Activated CD8-positive, alpha-beta T cell treated with anti-CD3 and anti-CD28 coated beads, Interleukin-2, amount 10 ng/mL, durations not matched to agents 7 days and 5 days (primary cell): ENCODE measurements at regions of chr10 and their contacts with region 1.

Region 1: DNA sequence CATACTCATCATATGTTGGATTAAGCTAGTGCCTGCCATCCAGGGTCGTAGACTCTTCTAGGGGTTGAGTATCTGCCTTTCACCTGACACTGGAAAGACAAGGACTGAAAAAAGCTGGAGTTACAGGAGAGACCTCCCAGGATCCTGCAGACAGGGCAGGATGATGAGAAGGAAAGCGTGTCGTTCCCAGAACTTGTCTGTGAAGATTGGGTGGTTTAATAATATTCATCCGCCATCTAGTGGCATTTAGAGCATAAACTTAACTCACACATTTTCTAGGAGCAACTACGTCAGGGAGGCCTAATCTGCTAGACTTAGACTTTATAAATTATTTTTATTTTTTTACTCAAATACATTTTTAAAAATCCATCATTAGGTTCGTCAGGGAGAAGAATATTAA is 59.6 kb downstream of the ADRB1 start:
- DNase-seq: peak; percentile 15
- ATAC-seq: peak; percentile 51
- H3K4me3 Mint-ChIP-seq: no peak overlapping the region
- H3K27ac Mint-ChIP-seq: no peak overlapping the region
- H3K4me1 Mint-ChIP-seq: peaks cover 38% of the 10 kb centered on the region
- H3K27me3 Mint-ChIP-seq: peaks cover 40% of the 10 kb centered on the region

Region 2: DNA sequence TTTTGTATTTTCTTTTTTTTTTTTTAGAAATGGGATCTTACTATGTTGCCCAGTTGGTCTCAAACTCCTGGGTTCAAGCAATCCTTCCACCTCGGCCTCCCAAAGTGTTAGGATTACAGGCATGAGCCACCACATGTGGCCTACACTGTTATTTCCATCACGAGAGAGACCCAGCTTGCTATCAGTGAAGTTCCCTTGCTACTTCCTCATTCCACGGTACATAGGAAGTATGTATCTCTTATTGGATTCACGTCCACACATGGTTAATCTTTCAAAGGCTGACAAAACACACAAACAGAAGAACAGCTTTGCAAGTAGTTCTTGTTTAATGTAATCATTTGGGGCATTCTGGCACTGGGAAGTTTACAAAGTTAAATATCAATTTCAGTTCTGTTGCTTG is 300.3 kb before region 1 on chr10:
- CTCF ChIA-PET with region 1: interaction called, 85 read pairs
- POLR2A ChIA-PET with region 1: no interaction called
- DNase-seq: no peak
- ATAC-seq: no peak
- H3K4me3 Mint-ChIP-seq: no peak overlapping the region
- H3K27ac Mint-ChIP-seq: no peak overlapping the region
- H3K4me1 Mint-ChIP-seq: no peaks in the 10 kb centered on the region
- H3K27me3 Mint-ChIP-seq: peaks cover 38% of the 10 kb centered on the region

Region 3: DNA sequence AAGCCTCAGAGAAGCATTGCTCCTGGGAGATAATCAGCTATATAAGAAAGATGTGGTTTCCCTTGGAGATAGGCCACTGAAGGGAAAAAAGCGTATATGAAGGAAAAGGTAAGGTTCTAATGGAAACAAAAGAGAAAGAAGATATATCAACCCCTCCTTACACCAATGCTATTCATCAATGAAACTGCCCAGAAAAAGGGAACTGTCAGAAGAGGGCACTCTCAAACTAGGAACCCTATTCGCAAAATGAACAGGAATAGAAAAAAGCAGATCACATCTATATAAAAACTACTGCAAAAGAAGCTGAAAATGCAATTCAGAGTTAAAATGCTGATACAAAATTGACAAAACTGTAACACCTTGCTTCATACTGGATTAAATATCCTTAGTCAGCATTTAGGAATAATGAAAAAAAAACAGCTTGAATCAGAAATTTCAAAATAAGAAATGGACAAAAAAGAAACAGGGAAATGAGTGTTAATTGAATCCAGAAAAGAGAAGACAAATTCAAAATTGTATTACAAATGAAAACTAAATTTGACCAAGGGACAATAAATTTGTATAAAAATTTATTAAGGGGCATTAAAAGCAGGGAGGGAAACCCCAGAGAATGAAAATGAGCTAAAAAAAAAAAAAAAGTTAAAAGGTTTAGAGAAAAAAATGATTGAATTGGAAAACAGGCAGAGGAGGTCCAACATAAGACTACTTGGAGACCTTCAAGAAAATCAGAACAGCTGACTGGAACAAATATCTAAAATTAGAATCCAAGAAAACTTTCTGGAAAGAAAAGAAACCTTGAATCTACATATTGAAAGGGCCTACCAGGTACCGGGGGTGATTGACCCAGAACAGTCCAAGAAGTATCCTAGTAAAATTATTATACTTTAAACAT is 230.9 kb before region 1 on chr10:
- CTCF ChIA-PET with region 1: interaction called, 10 read pairs
- POLR2A ChIA-PET with region 1: no interaction called
- DNase-seq: no peak
- ATAC-seq: no peak
- H3K4me3 Mint-ChIP-seq: no peak overlapping the region
- H3K27ac Mint-ChIP-seq: no peak overlapping the region
- H3K4me1 Mint-ChIP-seq: no peaks in the 10 kb centered on the region
- H3K27me3 Mint-ChIP-seq: no peaks in the 10 kb centered on the region

Region 4: DNA sequence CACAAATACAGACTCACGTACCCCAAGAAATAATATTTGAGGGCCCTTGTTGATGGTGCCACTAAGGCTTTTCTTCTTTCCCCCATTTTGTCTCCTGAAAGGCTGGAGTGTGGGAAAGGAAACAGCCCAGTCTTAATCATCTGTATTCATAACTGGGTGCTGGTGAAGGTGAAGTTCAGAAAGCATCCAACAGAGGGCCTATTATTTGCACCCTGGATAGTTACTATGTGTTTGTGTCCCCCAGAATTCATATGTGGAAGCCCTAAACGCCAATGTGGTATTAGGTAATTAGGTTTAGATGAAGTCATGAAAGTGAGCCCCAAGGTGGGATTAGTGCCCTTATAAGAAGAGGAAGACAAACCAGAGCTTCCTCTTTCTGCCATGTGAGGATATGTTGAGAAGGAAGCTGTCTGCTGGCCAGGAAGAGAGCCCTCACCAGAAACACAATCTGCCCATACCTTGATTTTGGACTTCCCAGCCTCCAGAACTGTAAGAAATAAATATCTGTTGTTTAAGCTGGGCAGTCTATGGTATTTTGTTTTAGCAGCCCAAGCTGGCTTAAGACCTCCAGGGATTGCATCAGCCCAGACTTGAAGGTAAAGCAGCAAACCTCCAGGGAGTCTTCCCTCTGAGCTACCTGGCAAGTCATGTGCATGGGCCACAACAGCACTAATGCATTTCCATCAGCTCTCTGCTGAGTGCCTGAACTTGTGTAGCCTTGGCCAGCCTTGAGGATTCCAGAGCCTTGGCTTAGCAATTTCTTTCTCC is 149.6 kb before region 1 on chr10:
- CTCF ChIA-PET with region 1: interaction called, 10 read pairs
- POLR2A ChIA-PET with region 1: no interaction called
- DNase-seq: no peak
- ATAC-seq: no peak
- H3K4me3 Mint-ChIP-seq: no peak overlapping the region
- H3K27ac Mint-ChIP-seq: no peak overlapping the region
- H3K4me1 Mint-ChIP-seq: peaks cover 14% of the 10 kb centered on the region
- H3K27me3 Mint-ChIP-seq: peaks cover 25% of the 10 kb centered on the region

Region 5: DNA sequence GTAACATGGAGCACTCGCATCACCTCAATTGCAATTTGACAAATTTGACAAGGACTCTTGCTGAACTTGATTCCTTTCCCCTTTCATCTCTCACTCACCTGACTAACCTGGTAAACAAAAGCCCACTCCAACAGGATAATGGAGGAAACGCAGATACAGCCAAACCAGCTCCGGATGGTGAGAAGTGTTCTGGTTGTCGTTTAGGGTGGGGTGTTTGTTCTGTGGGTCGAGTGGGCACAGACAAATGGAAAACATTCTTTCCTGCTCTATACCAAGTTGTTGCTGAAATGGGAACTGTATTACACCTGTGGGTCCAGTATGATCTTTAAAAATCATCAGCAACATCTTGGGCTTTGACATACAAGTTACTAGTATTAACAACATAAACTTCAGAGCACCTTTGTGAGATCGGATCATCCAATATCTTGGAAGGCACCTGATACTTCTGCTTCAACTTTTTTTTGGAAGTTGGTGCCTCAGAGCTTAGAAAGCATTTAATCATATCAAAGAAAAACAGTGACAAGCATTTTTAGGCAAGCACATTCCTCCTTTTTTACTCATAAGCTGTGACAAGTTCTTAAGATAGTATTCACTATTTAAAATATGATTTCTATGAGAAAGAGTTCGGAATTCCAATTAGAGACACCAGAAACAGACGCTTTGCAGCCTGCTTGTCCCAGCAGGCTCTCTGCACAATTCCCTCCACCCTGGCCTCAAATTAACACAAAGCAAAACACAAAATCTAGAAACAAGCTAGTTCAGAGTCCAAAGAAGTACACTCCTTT is 12.6 kb after region 1 on chr10:
- CTCF ChIA-PET with region 1: interaction called, 22 read pairs
- POLR2A ChIA-PET with region 1: no interaction called
- DNase-seq: no peak
- ATAC-seq: no peak
- H3K4me3 Mint-ChIP-seq: no peak overlapping the region
- H3K27ac Mint-ChIP-seq: no peak overlapping the region
- H3K4me1 Mint-ChIP-seq: no peaks in the 10 kb centered on the region
- H3K27me3 Mint-ChIP-seq: peaks cover 20% of the 10 kb centered on the region